ENCODE measurements at regions of chr3 and their contacts with region 1.

Region 1: GRCh38 chr3:45938864-45939263 is 4.4 kb upstream of the CXCR6 start:
- DNase-seq: peak; percentile 94
- ATAC-seq: peak; percentile 75
- H3K4me3 Mint-ChIP-seq: no peak overlapping the region
- H3K27ac Mint-ChIP-seq: peak overlapping the region; percentile 56
- H3K4me1 Mint-ChIP-seq: peaks cover 65% of the 10 kb centered on the region
- H3K27me3 Mint-ChIP-seq: no peaks in the 10 kb centered on the region

Region 2: DNA sequence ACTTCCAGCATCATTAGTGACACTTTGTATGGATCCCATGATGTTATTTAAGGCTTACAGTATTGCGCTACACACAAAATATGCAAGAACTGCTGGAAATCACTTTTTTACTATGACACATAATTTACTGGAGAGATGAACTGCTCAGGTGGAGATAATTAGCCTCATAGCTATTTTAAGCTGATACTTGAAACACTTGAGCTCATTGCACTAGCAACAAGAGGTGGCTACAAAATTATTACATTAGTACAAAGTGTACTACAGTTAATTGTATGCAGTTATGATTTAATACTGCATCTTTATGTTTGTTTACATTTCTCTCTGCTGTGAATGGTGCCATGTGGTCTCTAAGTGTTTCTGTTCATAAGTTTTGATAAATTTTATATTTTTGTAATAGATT is 90.5 kb before region 1 on chr3:
- CTCF ChIA-PET with region 1: no interaction called
- POLR2A ChIA-PET with region 1: no interaction called
- DNase-seq: no peak
- ATAC-seq: no peak
- H3K4me3 Mint-ChIP-seq: no peak overlapping the region
- H3K27ac Mint-ChIP-seq: no peak overlapping the region
- H3K4me1 Mint-ChIP-seq: peaks cover 22% of the 10 kb centered on the region
- H3K27me3 Mint-ChIP-seq: peaks cover 53% of the 10 kb centered on the region

Region 3: GRCh38 chr3:45958321-45958791 is 19.5 kb after region 1 on chr3:
- CTCF ChIA-PET with region 1: interaction called, 17 read pairs
- POLR2A ChIA-PET with region 1: interaction called, 4 read pairs
- DNase-seq: no peak
- ATAC-seq: no peak
- H3K4me3 Mint-ChIP-seq: no peak overlapping the region
- H3K27ac Mint-ChIP-seq: peak overlapping the region; percentile 69
- H3K4me1 Mint-ChIP-seq: peaks cover 76% of the 10 kb centered on the region
- H3K27me3 Mint-ChIP-seq: no peaks in the 10 kb centered on the region

Region 4: GRCh38 chr3:45964139-45964538 is 25.3 kb after region 1 on chr3:
- CTCF ChIA-PET with region 1: interaction called, 24 read pairs
- POLR2A ChIA-PET with region 1: interaction called, 6 read pairs
- DNase-seq: peak; percentile 59
- ATAC-seq: peak; percentile 50
- H3K4me3 Mint-ChIP-seq: peak overlapping the region; percentile 9
- H3K27ac Mint-ChIP-seq: peak overlapping the region; percentile 87
- H3K4me1 Mint-ChIP-seq: peaks cover 91% of the 10 kb centered on the region
- H3K27me3 Mint-ChIP-seq: no peaks in the 10 kb centered on the region

Region 5: DNA sequence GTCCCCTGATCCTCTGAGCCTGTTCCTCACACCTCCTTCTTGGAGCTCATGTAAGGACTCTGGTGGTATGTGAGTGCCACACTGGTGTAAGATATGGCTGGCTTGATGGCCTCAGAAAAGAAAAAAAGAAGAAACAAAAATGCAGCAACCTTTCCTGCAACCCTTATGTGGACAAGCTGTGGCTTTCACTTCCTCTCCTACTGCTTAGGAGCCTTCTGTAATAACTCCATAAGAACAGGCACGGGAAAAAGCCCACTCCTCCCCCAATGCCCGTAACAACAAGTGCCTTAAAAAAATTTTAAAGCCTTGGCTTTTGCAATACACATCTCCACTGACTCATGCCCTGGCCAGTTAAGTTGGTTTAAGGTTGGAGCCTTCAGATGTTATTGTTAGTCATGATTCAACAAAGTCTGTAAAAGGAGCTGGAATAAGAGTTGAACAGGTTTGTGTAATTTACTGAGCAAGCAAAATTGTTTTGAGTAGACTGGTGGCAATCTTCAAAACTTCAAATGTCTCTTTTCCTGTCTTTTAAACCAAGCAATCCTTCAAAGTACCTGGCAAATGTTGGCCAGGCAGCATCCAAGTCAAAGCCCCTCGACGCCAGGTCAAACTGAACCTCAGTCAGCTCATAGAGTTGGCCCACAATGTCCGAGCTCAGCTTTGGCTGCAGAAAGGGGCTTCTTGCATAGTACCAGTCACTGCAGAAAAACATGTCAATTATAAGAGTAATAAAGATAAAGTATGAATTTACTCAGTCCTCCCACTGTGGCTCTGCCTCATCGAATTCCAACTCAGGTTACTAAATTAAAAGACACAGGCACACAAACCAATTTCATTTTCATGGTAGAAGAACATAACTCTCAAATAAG is 33.9 kb after region 1 on chr3:
- CTCF ChIA-PET with region 1: interaction called, 16 read pairs
- POLR2A ChIA-PET with region 1: interaction called, 4 read pairs
- DNase-seq: no peak
- ATAC-seq: peak; percentile 29
- H3K4me3 Mint-ChIP-seq: peak overlapping the region; percentile 25
- H3K27ac Mint-ChIP-seq: peak overlapping the region; percentile 79
- H3K4me1 Mint-ChIP-seq: peaks cover 90% of the 10 kb centered on the region
- H3K27me3 Mint-ChIP-seq: no peaks in the 10 kb centered on the region

Region 6: DNA sequence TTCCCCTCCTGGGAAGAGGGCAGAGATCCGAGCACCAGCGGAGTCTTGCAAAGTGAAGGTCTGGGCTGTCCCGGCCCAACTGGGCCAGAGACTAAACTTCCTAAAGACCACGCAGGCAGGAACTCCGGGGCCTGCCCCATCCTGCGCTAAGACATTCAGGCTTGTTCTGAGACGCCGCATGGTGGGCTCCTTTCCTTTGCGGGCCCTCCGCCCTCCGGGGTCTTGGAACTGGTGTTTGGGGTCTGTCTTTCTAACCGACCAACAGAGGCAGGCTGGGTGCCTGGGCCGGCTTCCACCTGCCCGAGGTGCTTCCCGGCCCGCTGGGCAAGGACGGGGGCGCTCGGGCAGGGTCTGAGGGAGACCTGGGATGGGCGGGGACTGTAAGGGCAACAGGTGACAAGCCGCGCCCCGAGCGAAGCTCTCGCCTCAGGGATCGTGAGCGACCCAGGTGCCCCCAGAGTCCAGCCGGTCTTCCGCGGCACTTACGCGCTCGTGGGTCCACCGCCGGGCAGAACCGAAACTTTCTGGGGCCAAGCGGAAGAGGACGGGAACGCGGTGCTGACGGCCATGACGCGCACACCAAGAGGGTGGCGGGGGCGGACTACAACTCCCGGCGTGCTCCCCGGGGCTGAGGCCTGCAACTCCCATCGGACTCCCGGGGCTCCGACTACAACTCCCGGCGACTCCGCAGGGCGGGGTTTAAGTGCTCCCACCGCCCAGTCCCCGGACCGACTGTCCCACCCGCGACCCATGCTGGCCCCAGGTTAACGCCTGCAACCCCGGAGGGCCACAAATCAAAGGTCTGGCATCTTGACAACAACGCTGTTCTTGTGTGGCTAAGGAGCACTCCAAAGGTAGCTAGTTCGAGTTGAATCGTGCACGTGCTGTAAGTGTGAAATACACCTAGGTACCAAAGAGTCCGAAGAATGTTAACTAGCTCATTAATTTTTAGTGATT is 56.6 kb after region 1 on chr3 and contains the start of gene FYCO1:
- CTCF ChIA-PET with region 1: interaction called, 29 read pairs
- POLR2A ChIA-PET with region 1: interaction called, 6 read pairs
- DNase-seq: peak; percentile 94
- ATAC-seq: peak; percentile 83
- H3K4me3 Mint-ChIP-seq: peak within 1 kb of the TSS; percentile 87
- H3K27ac Mint-ChIP-seq: peak within 1 kb of the TSS; percentile 92
- H3K4me1 Mint-ChIP-seq: peaks cover 62% of the 10 kb centered on the region
- H3K27me3 Mint-ChIP-seq: peaks cover 4% of the 10 kb centered on the region
- total RNA-seq, gene FYCO1: 16.6 to 19.5 TPM

Region 7: DNA sequence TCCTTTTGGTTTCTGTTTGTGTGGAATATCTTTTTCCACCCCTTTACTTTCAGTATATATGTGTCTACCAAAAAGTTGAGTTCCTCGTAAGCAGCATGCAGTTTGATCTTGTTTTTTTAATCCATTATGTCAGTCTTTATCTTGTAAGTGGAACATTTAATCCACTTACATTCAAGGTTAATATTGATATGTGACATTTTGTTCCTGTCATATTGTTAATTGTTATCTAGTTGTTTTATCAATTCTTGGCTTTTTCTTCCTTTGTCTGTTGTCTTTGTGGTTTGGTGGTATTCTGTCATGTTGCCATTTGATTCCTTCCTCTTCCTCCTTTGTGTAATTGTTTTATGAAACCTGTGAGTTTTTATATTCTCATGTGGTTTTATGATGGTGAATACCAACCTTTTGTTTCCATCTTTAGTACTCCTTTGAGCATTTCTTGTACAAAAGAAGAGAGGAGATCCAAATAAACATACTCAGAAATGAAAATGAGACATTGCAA is 131.8 kb after region 1 on chr3:
- CTCF ChIA-PET with region 1: interaction called, 389 read pairs
- POLR2A ChIA-PET with region 1: interaction called, 5 read pairs
- DNase-seq: no peak
- ATAC-seq: peak; percentile 45
- H3K4me3 Mint-ChIP-seq: peak overlapping the region; percentile 8
- H3K27ac Mint-ChIP-seq: peak overlapping the region; percentile 68
- H3K4me1 Mint-ChIP-seq: peaks cover 81% of the 10 kb centered on the region
- H3K27me3 Mint-ChIP-seq: peaks cover 9% of the 10 kb centered on the region

Region 8: DNA sequence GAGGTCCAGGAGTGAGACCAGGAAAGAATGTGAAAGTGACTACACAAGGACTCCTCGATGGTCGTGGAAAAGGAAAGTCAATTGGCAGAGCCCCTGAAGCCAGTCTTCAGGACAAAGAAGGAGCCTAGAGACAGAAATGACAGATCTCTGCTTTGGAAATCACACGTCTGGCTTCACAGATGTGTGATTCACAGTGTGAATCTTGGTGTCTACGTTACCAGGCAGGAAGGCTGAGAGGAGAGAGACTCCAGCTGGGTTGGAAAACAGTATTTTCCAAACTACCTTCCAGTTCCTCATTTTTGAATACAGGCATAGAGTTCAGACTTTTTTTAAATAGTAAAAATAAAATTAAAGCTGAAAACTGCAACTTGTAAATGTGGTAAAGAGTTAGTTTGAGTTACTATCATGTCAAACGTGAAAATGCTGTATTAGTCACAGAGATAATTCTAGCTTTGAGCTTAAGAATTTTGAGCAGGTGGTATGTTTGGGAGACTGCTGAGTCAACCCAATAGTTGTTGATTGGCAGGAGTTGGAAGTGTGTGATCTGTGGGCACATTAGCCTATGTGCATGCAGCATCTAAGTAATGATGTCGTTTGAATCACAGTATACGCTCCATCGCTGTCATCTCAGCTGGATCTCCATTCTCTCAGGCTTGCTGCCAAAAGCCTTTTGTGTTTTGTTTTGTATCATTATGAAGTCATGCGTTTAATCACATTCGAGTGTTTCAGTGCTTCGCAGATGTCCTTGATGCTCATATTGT is 421.0 kb after region 1 on chr3:
- CTCF ChIA-PET with region 1: no interaction called
- POLR2A ChIA-PET with region 1: no interaction called
- DNase-seq: no peak
- ATAC-seq: peak; percentile 43
- H3K4me3 Mint-ChIP-seq: no peak overlapping the region
- H3K27ac Mint-ChIP-seq: no peak overlapping the region
- H3K4me1 Mint-ChIP-seq: peaks cover 74% of the 10 kb centered on the region
- H3K27me3 Mint-ChIP-seq: peaks cover 2% of the 10 kb centered on the region